ENCODE measurements at regions of chr9 and their contacts with region 1.

Region 1: GRCh38 chr9:93154315-93154903 is 20.4 kb upstream of the NINJ1 start:
- DNase-seq: peak; percentile 50
- H3K4me3 Mint-ChIP-seq: no peak overlapping the region
- H3K27ac Mint-ChIP-seq: no peak overlapping the region
- H3K4me1 Mint-ChIP-seq: peaks cover 29% of the 10 kb centered on the region
- H3K27me3 Mint-ChIP-seq: no peaks in the 10 kb centered on the region

Region 2: GRCh38 chr9:93143830-93144530 is 10.4 kb before region 1 on chr9:
- CTCF ChIA-PET with region 1: interaction called, 10 read pairs
- POLR2A ChIA-PET with region 1: no interaction called
- DNase-seq: peak; percentile 76
- H3K4me3 Mint-ChIP-seq: peak overlapping the region; percentile 39
- H3K27ac Mint-ChIP-seq: peak overlapping the region; percentile 97
- H3K4me1 Mint-ChIP-seq: peaks cover 61% of the 10 kb centered on the region
- H3K27me3 Mint-ChIP-seq: no peaks in the 10 kb centered on the region

Region 3: GRCh38 chr9:93254821-93255468 is 100.5 kb after region 1 on chr9:
- CTCF ChIA-PET with region 1: no interaction called
- POLR2A ChIA-PET with region 1: no interaction called
- DNase-seq: no peak
- H3K4me3 Mint-ChIP-seq: no peak overlapping the region
- H3K27ac Mint-ChIP-seq: no peak overlapping the region
- H3K4me1 Mint-ChIP-seq: no peaks in the 10 kb centered on the region
- H3K27me3 Mint-ChIP-seq: no peaks in the 10 kb centered on the region